Activated CD4-positive, alpha-beta memory T cell treated with anti-CD3 and anti-CD28 coated beads, Interleukin-2, amount 10 ng/mL, durations not matched to agents 7 days and 5 days (primary cell): ENCODE measurements at regions of chr14 and their contacts with region 1.

Region 1: DNA sequence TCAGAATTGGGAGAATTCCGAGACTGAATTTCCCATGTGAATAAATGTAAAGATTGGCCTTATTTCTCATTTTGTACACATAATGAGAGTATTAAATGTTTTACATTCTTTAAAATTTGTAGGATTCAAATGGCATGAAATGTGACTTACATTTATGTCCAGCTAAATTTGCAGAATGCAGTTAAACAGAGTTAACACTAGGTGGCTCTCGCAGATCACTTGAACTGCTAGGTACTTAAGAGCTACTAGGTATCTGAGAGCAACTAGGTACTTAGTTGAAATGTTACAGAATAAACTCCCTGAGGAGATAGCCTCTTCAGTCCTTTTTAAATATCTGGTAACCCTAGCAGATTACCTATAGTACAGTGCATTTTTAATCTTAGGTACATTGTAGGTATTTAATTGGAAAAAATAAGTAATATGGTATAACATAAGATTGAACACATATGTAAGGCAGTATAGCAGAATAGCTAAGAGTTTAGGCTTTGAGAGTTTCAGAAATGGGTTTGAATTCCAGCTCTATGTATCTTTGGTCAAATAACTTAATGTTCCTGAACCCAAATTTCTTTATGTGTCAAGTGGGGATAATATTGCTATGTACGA is 73.8 kb downstream of the KIAA0586 start:
- DNase-seq: no peak
- H3K4me3 Mint-ChIP-seq: no peak overlapping the region
- H3K27ac Mint-ChIP-seq: no peak overlapping the region
- H3K4me1 Mint-ChIP-seq: no peaks in the 10 kb centered on the region
- H3K27me3 Mint-ChIP-seq: no peaks in the 10 kb centered on the region

Region 2: DNA sequence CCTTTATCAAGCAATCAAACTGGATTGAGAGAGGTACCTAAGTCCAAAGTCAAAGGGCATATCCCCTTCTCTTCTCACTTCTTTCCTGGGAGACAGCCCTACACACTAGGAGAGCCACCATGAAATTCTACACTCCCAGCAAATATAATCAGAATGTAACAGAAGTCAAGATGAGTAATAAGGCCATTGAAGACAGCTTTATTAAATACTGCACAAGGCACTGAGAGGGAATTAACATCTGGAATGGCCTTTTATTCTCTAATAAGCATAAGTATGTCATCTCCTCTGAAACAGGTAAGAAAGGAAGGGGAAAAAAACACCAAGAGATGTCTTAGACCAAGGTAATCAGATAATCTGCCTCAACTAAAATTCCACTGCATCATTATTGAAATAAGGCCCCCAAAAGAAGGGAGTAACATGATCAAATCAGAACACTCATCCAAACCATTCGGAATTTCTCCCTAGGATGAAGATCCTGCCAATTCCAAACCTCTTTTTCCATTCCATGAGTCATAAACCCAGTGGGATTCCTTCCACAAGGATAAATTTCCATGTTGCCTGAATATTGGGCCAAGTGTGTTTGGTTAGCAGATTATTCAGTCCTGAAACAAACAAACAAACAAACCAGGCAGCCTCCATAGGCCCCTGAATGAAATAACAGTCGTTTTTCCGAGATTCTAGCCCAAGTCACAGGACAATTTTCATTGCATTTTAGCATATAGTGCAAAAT is 655.3 kb before region 1 on chr14:
- CTCF ChIA-PET with region 1: no interaction called
- POLR2A ChIA-PET with region 1: no interaction called
- DNase-seq: no peak
- H3K4me3 Mint-ChIP-seq: no peak overlapping the region
- H3K27ac Mint-ChIP-seq: no peak overlapping the region
- H3K4me1 Mint-ChIP-seq: no peaks in the 10 kb centered on the region
- H3K27me3 Mint-ChIP-seq: no peaks in the 10 kb centered on the region

Region 3: DNA sequence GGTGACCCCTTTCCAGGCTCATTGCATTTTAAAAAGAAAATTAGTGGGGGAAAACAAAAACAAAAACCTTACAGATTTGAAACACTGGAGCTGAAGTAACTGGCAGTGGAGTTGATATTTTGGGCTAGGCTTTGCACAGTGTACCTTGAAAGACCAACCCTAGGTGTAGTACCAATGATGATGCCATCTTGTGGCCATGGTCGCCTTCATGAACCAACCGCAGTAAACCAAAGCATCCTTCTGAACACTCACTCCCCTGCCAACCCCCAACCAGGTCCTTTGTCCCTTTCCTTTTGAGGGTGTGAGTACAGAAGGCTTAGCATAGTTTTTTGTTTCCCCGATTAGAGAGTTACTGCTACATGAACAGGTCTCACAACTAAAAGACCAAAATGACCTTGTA is 99.7 kb before region 1 on chr14:
- CTCF ChIA-PET with region 1: no interaction called
- POLR2A ChIA-PET with region 1: no interaction called
- DNase-seq: no peak
- H3K4me3 Mint-ChIP-seq: no peak overlapping the region
- H3K27ac Mint-ChIP-seq: no peak overlapping the region
- H3K4me1 Mint-ChIP-seq: peaks cover 3% of the 10 kb centered on the region
- H3K27me3 Mint-ChIP-seq: no peaks in the 10 kb centered on the region

Region 4: DNA sequence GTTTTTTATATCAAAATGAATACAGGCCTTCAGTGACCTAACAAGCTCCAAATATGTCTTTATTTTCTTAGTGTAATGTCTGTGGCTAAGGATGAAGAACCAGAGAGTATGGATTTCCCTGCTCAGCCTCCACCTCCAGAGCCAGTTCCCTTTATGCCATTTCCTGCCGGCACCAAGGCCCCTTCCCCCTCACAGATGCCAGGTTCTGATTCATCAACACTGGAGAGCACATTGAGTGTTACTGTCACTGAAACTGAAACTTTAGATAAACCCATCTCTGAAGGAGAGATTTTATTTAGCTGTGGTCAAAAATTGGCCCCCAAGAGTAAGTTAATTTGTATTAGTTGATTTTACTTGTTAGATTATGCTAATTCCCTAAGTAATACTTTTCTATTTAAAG is 12.8 kb before region 1 on chr14:
- CTCF ChIA-PET with region 1: interaction called, 11 read pairs
- POLR2A ChIA-PET with region 1: no interaction called
- DNase-seq: no peak
- H3K4me3 Mint-ChIP-seq: no peak overlapping the region
- H3K27ac Mint-ChIP-seq: peak overlapping the region; percentile 42
- H3K4me1 Mint-ChIP-seq: peaks cover 12% of the 10 kb centered on the region
- H3K27me3 Mint-ChIP-seq: no peaks in the 10 kb centered on the region

Region 5: GRCh38 chr14:58513272-58513671 is 12.0 kb after region 1 on chr14:
- CTCF ChIA-PET with region 1: interaction called, 12 read pairs
- POLR2A ChIA-PET with region 1: no interaction called
- DNase-seq: no peak
- H3K4me3 Mint-ChIP-seq: no peak overlapping the region
- H3K27ac Mint-ChIP-seq: no peak overlapping the region
- H3K4me1 Mint-ChIP-seq: no peaks in the 10 kb centered on the region
- H3K27me3 Mint-ChIP-seq: no peaks in the 10 kb centered on the region

Region 6: DNA sequence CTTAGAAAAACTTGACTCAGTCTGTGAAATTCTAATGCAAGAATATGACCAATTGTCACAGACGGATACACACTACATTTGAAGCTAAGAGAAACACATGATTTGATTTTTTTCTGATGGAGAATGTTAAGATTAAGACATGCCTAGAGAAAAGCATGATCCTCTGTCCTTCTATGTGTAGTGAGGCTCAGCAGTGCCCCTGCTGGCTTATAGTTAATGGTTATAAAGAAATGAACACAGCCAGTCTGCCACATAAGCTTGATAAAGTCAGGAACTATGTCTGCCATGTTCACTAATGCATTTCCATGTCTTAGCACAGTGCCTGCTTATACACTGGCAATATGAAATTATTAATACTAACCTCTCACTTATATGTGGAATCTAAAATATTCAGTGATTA is 519.1 kb after region 1 on chr14:
- CTCF ChIA-PET with region 1: interaction called, 11 read pairs
- POLR2A ChIA-PET with region 1: no interaction called
- DNase-seq: no peak
- H3K4me3 Mint-ChIP-seq: no peak overlapping the region
- H3K27ac Mint-ChIP-seq: no peak overlapping the region
- H3K4me1 Mint-ChIP-seq: no peaks in the 10 kb centered on the region
- H3K27me3 Mint-ChIP-seq: peaks cover 3% of the 10 kb centered on the region